BJ (cell line): ENCODE measurements at regions of chr11 and their contacts with region 1.

Region 1: DNA sequence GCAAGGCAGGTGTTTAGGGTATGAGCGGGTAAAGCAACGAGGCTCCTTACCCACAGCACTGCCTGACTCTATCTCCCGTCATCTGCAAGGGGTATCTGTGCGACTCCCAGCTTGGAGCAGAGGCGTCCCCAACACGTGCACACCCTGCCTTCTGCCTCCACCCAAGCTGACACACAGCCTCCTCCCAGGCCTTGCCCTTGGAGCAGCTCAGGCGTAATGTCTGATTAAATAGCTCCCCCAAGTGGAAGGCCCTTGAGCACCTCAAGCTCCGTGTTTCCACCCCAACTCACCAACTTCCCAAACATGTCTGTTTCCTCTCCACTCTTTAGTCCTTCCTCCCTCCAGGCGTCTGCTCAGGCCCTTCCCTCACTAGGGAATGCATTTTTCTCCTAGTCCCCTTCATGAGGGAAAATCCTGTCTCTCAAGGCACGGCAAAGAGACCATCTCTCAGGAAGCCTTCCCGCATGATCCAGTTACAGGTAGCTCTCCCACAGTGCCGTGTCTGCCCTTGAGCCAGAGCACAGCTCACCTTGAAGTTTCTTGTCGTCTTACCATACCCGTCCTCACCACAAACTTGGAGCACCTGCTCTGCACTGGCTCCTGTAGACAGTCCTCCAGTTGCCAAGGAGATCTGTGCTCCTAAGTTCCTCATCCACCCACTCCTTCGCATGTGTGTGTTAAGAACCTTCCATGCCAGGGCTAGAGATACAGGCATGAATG is 15.8 kb downstream of the CYB5R2 start:
- DNase-seq: no peak
- H3K4me3 ChIP-seq: no peak overlapping the region
- H3K27me3 ChIP-seq: no peaks in the 10 kb centered on the region
- CTCF ChIP-seq: peak; percentile 70

Region 2: GRCh38 chr11:7637447-7638157 is 19.9 kb before region 1 on chr11:
- CTCF ChIA-PET with region 1: interaction called, 12 read pairs
- POLR2A ChIA-PET with region 1: no interaction called
- DNase-seq: peak; percentile 46
- H3K4me3 ChIP-seq: no peak overlapping the region
- H3K27me3 ChIP-seq: no peaks in the 10 kb centered on the region
- CTCF ChIP-seq: no peak